Dendritic cell treated with granulocyte-macrophage colony-stimulating factor and Interleukin-4, amounts not matched to agents 40 ng/mL and 50 ng/mL, for 4 days (primary cell): ENCODE measurements at regions of chr12 and their contacts with region 1.

Region 1: GRCh38 chr12:103578926-103579325 is 8.1 kb upstream of the STAB2 start:
- H3K4me3 Mint-ChIP-seq: no peak overlapping the region
- H3K27ac Mint-ChIP-seq: no peak overlapping the region
- H3K4me1 Mint-ChIP-seq: peaks cover 9% of the 10 kb centered on the region
- H3K27me3 Mint-ChIP-seq: peaks cover 33% of the 10 kb centered on the region

Region 2: DNA sequence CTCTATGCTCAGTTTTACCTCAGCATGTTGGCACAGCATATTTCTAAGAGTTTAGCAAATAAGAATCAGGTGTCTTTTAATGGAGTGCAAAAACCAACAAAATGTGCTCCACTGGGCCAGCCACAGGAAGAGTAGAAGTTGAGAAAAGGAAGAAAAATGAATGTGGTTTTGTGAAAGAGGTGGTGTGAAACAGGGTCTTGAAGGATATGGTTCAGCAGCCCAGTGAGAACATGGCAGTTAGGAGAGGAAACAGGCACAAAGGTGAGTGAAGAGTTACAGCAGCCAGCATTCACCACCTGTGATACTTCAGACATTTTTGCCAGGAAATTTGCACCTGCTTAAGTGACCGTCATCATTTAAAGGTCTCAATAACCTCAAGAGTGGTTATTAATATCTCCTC is 10.6 kb after region 1 on chr12:
- intact Hi-C with region 1: no loop called
- H3K4me3 Mint-ChIP-seq: no peak overlapping the region
- H3K27ac Mint-ChIP-seq: no peak overlapping the region
- H3K4me1 Mint-ChIP-seq: no peaks in the 10 kb centered on the region
- H3K27me3 Mint-ChIP-seq: peaks cover 4% of the 10 kb centered on the region

Region 3: GRCh38 chr12:103877934-103878510 is 299.1 kb after region 1 on chr12:
- intact Hi-C with region 1: loop called (anchors 5 kb)
- H3K4me3 Mint-ChIP-seq: no peak overlapping the region
- H3K27ac Mint-ChIP-seq: no peak overlapping the region
- H3K4me1 Mint-ChIP-seq: no peaks in the 10 kb centered on the region
- H3K27me3 Mint-ChIP-seq: peaks cover 3% of the 10 kb centered on the region